ENCODE measurements at regions of chr1 and their contacts with region 1.

Region 1: DNA sequence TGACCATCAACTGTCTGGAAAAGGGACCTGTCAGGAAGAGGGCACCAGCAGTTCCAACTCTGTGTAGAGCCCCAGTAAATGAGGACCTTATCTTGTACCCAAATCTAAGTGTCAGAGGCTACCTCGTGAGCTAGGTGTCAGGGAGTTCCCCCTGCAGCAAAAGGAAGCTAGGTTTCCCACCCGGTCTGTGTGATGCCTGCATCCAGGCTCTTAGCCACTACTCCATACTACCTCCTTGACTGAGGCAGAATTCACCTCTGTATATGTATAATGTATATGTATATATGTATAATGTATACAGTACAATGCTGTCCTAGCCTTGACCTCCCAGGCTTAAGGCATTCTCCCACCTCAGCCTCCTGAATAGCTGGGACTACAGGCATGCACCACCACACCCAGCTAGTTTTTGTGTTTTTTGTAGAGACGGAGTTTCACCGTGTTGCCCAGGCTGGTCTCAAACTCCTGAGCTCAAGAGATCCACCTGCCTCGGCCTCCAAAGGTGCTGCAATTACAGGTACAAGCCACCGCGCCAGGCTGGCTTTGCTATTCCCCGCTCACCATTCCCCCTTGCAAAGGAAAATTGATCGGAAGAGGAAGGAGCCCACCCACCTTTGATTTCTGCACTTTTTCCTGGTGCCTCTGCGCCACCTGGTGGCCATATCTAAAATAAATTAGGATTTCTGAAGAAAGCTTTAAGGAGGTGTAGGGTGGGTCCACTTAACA is 15.7 kb upstream of the LUZP1 start:
- DNase-seq: peak; percentile 50
- ATAC-seq: peak; percentile 34
- H3K4me3 Mint-ChIP-seq: peak overlapping the region; percentile 60
- H3K27ac Mint-ChIP-seq: no peak overlapping the region
- H3K4me1 Mint-ChIP-seq: peaks cover 3% of the 10 kb centered on the region
- H3K27me3 Mint-ChIP-seq: peaks cover 11% of the 10 kb centered on the region
- CTCF ChIP-seq: peak; percentile 92

Region 2: GRCh38 chr1:23019094-23019862 is 165.1 kb before region 1 on chr1 and contains the start of gene KDM1A:
- CTCF ChIA-PET with region 1: interaction called, 11 read pairs
- POLR2A ChIA-PET with region 1: no interaction called
- intact Hi-C with region 1: no loop called
- DNase-seq: peak; percentile 97
- ATAC-seq: peak; percentile 98
- H3K4me3 Mint-ChIP-seq: peak within 1 kb of the TSS; percentile 93
- H3K27ac Mint-ChIP-seq: peak within 1 kb of the TSS; percentile 90
- H3K4me1 Mint-ChIP-seq: peaks cover 36% of the 10 kb centered on the region
- H3K27me3 Mint-ChIP-seq: no peaks in the 10 kb centered on the region
- CTCF ChIP-seq: no peak
- total RNA-seq, gene KDM1A: 75.2 to 77.7 TPM

Region 3: GRCh38 chr1:23081376-23081775 is 103.0 kb before region 1 on chr1:
- CTCF ChIA-PET with region 1: interaction called, 27 read pairs
- POLR2A ChIA-PET with region 1: interaction called, 4 read pairs
- intact Hi-C with region 1: no loop called
- DNase-seq: no peak
- ATAC-seq: peak; percentile 39
- H3K4me3 Mint-ChIP-seq: no peak overlapping the region
- H3K27ac Mint-ChIP-seq: peak overlapping the region; percentile 13
- H3K4me1 Mint-ChIP-seq: no peaks in the 10 kb centered on the region
- H3K27me3 Mint-ChIP-seq: no peaks in the 10 kb centered on the region
- CTCF ChIP-seq: peak; percentile 18

Region 4: DNA sequence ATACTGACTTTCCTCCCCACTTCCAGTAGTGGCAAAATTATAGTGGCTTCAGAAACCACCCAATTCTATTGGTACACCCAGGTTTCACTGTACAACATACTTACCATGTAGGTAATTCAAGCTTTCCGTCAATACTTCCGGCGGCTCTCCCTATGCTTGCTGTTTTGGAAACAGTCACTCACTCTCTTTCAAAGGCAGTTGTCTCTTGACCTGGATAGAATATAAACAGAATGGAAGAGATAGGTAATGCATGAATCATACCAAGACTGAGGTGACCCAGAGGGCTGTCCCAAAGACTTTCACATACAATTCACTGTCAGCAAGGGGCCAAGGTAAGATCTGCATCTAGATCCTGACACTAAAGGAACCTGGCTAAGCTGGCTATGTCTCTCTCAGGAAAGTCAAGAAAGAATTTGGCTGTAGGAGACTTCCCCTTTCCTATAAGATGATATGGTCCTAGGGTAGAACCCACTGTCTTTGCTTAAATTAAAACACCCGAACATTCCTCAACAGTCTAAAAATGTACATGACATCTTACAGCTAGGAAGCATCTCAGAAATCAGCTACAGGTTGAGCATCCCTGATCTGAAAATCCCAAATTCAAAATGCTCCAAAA is 75.3 kb before region 1 on chr1:
- CTCF ChIA-PET with region 1: interaction called, 748 read pairs
- POLR2A ChIA-PET with region 1: interaction called, 3 read pairs
- intact Hi-C with region 1: no loop called
- DNase-seq: peak; percentile 45
- ATAC-seq: peak; percentile 12
- H3K4me3 Mint-ChIP-seq: no peak overlapping the region
- H3K27ac Mint-ChIP-seq: no peak overlapping the region
- H3K4me1 Mint-ChIP-seq: peaks cover 49% of the 10 kb centered on the region
- H3K27me3 Mint-ChIP-seq: no peaks in the 10 kb centered on the region
- CTCF ChIP-seq: no peak

Region 5: GRCh38 chr1:23163395-23163794 is 21.0 kb before region 1 on chr1:
- CTCF ChIA-PET with region 1: interaction called, 93 read pairs
- POLR2A ChIA-PET with region 1: interaction called, 3 read pairs
- intact Hi-C with region 1: no loop called
- DNase-seq: no peak
- ATAC-seq: no peak
- H3K4me3 Mint-ChIP-seq: no peak overlapping the region
- H3K27ac Mint-ChIP-seq: no peak overlapping the region
- H3K4me1 Mint-ChIP-seq: peaks cover 32% of the 10 kb centered on the region
- H3K27me3 Mint-ChIP-seq: no peaks in the 10 kb centered on the region
- CTCF ChIP-seq: no peak

Region 6: DNA sequence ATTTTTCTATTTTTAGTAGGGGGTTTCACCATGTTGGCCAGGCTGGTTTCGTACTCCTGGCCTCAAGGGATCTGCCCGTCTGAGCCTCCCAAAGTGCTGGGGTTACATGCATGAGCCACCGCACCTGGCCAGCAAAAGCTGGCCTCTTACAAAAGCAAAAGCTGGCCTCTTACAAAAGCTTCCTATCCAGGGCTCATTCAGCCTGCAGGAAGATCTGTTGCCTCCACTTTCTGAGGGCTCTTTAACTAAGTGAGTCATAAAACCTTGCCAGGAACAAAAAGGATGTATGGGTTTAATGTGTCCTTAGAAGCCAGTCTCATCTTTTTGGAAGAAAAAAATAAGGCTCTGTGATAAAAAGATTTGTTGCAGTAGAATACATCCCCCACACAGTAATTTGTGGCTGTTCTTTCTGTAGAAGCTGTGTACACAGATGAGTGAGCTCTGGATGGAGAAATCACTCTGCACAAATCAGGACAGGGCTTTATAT is 17.9 kb after region 1 on chr1:
- CTCF ChIA-PET with region 1: interaction called, 50 read pairs
- POLR2A ChIA-PET with region 1: no interaction called
- intact Hi-C with region 1: no loop called
- DNase-seq: no peak
- ATAC-seq: no peak
- H3K4me3 Mint-ChIP-seq: no peak overlapping the region
- H3K27ac Mint-ChIP-seq: no peak overlapping the region
- H3K4me1 Mint-ChIP-seq: no peaks in the 10 kb centered on the region
- H3K27me3 Mint-ChIP-seq: peaks cover 3% of the 10 kb centered on the region
- CTCF ChIP-seq: no peak

Measured in activated CD8-positive, alpha-beta T cell treated with anti-CD3 and anti-CD28 coated beads for 36 hours (primary cell).